ENCODE measurements at regions of chr11 and their contacts with region 1.

Region 1: DNA sequence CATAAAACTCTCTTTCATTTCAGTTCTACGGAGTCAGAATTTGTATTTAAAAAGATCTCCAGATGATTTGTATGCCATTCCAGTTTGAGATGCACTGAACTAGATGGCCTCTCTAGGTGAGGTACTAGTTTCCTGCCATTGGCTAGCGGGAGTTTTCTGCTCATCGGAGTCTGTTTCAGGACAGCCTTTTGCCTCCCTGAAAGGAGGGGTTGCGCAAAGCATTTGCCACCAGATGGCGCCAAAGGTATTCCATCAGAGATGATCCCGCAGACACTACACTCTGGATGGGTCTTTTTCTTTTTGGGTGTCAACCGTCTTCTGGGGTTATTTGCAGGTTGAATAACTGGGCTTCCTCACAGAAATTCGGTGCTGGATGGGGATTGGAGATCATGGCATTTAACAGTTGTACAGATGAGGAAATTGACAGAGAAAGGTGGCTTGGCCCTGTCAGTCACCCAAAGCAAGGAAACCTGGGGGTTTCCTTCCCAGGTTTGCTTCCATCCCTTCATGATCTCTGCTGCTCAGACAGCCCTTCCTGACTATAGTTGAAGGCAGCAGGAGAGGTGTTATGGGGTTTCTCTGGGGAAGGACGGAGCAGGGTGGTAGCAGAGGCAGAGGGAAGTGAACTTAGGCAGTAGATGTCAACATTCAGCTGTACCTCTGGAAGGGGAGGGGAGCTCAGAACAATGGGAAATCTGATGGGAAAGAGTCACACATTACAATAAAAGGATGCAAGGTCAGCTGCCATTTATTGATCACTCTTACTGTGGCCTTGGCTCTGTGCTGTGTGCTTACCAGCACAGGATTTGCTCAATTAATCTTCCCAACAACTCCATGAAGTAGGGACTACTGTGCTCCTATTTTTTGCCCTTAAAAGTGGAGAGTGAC is 81.6 kb downstream of the CCDC81 start:
- DNase-seq: peak; percentile 95
- ATAC-seq: peak; percentile 81

Region 2: DNA sequence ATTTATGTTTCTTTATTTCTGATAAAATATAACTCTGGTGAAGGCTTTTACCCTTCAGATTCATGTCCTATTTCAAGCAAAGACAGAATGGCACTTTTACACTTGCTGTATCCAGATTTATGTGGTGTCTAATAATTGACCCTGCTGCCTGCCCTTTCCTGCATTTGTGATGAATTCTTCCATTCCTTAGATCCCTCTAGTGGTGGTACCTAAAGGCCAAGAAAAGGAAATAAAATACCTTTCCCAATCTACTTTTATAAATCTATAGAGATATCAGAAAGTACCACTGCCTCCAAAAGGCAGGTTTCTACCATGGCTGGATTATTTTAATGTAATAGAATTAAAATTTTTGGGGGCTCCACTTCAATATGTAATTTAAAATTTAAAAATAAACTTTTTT is 47.5 kb before region 1 on chr11:
- intact Hi-C with region 1: no loop called
- DNase-seq: no peak
- ATAC-seq: no peak

Region 3: GRCh38 chr11:86608251-86608799 is 152.0 kb after region 1 on chr11:
- intact Hi-C with region 1: loop called (anchors 10 kb)
- DNase-seq: peak; percentile 80
- ATAC-seq: peak; percentile 93

Region 4: DNA sequence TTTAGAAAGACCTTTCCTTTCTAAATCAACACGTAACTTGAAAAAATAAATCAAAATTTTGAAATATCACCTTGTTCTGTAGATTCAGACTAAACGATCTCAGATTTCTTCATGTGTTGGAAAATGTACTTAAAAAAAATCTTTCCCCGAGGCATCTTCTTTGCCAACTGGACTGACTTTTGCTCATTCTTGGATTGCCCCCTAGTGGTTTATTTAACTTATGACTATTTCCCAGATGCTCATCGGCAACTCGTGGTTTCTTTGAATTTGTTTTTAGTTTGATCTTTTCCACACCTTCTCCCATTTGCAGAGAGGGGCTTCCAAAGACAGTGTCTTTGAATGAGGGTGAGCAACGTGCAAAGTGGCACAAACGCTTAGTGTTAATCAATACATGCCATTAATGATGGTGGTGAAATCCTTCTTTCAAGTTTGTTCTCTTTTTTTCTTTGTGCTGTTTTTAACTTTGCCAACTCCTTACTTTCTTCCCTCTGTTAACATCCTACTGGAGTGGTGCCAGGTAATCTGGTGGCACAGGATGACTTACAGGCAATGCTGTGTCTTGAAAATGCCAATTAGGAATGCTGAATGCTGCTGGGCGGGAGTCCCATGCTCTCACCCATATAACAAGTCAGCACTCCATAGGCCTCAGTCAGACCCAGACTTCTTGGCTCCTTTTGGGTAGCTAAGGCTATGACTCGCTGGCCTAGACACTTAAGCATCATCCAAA is 362.3 kb after region 1 on chr11:
- intact Hi-C with region 1: loop called (anchors 5 kb)
- DNase-seq: no peak
- ATAC-seq: peak; percentile 74

Measured in sciatic nerve (tissue), 2 donors.